RWPE1 (cell line): ENCODE measurements at regions of chr1 and their contacts with region 1.

Region 1: GRCh38 chr1:204456826-204457442 is 37.7 kb downstream of the PIK3C2B start:
- DNase-seq: no peak
- H3K27ac ChIP-seq: no peak overlapping the region
- CTCF ChIP-seq: no peak

Region 2: DNA sequence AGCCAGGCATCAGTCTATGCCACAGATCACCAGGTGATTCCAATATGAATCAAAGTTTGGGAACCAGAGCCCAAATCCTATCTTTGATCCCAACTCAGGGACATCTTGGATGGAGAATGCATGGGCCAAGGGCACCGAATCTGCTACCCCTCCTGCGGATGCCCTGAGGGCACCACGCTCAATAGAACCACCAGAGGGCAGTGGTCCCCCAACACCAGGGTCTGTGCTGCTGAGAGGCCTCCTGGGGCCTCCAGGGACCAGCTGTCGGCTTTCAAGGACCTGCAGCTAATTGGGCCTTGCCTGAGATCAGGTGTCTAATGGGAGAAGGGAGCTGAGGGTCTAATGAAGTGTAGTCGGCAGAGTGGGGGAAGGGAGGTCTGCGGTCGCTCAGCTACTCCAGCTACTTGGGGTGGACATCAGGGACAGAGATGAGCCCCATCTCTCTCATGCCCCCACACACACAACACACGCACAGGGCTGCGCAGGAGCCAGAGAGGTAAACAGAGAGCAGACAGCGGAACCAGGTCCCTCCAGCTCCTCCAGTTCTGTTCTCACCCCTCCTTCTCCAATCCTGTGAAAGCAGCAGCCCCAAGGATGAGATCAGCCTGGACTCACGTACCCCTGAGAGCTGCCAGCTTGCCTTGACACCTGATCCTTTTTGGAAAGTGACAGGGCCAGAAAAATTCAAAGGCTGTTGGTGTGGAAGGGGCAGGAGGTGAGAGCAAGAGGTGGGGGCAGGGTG is 10.4 kb before region 1 on chr1:
- CTCF ChIA-PET with region 1: interaction called, 15 read pairs
- POLR2A ChIA-PET with region 1: interaction called, 3 read pairs
- DNase-seq: peak; percentile 67
- H3K27ac ChIP-seq: peak overlapping the region; percentile 48; the same call in 1 of the 2 replicates
- CTCF ChIP-seq: peak; percentile 37

Region 3: DNA sequence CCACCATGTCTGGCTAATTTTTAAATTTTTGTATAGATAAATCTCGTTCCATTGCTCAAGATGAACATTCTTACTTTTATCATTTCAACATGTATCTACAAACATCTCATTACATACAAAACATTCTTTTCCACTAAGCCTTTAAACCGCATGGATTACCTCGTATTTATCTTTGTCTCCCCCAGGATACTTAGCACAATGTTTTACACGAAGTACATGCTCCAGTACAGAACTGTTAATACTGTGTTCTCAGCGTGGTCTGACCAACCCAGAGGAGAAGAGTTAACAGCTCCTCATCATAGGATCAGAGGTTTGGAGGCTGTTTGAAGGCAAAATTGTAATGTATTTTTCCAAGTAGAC is 30.3 kb after region 1 on chr1:
- CTCF ChIA-PET with region 1: no interaction called
- POLR2A ChIA-PET with region 1: no interaction called
- DNase-seq: no peak
- H3K27ac ChIP-seq: no peak overlapping the region
- CTCF ChIP-seq: no peak